ENCODE measurements at regions of chr9 and their contacts with region 1.

Region 1: DNA sequence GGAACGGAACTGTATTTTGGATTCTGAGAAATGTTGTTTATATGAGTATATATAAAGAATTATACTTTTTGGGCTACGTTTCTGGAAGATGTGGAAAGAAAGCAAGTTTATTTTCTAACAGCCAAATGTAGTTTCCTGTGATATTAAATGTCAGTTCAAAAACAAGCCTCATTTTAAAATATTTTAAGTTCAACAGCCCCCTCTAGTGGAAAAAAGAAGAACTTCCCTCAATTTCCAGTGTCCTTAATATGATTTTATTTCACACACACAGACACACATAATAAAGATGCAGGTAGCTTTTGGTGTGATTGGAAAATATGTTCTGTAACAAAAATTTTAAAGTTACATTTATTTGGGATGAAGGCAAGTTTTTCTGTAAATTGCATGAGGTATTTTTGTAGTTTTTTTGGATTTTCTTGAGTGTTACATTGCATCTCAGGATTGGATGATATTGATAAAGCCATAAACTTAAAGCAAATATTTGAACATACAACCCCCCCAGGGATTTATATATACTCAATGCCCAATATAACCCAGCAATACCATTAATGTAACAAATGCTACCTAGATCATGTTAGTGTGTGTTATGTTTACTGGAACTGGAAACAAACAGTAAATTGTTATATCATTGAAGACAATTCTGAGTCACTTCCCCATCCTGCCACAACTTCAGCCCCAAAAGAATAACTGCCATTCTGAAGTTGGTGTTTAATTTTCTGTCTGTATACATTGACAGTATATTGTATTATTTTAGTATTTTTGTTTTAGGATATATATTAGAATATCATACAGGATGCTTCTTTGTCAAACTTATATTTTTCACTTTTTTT is 54.0 kb downstream of the CCDC171 start:
- DNase-seq: no peak
- H3K4me3 ChIP-seq: no peak overlapping the region
- H3K27ac ChIP-seq: no peak overlapping the region
- H3K4me1 ChIP-seq: no peaks in the 10 kb centered on the region
- H3K27me3 ChIP-seq: no peaks in the 10 kb centered on the region
- CTCF ChIP-seq: peak; percentile 68 to 72

Region 2: DNA sequence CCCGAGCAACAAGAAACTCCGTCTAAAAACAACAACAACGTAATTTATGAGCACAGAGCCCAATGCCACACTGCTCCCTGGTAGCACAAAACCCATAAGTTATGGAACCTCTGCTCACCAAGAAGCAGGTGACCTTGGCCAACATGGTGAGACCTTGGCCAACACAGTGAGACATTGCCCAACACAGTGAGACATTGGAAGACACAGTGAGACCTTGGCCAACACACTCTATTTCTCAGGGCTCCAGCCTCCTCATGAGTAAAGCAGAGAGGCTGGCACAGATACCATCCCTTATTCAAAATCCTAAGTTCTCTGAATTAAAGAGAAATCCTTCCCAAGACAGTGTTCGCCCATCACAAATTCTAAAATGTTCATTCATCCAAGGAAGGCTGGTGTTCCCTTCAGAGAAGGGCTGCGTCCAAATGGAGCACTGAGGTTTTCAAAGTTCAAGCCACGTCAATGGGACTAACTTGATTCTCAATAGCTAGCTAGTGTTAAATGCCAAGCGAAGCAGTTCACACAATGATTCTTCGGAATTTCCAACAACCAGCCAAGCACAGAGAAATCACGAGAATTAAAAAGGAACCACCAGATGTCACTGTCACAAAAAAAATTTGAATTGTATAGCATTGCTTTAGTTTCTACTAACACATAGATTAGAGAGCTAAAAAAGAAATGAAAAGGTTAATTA is 329.3 kb before region 1 on chr9:
- intact Hi-C with region 1: loop called (anchors 10 kb)
- DNase-seq: no peak
- H3K4me3 ChIP-seq: no peak overlapping the region
- H3K27ac ChIP-seq: peak overlapping the region in 1 of 2 donors; percentile 39
- H3K4me1 ChIP-seq: peaks cover 0 to 30% (median 4%) of the 10 kb centered on the region in 4 donors
- H3K27me3 ChIP-seq: no peaks in the 10 kb centered on the region
- CTCF ChIP-seq: peak; percentile 31 to 35

Region 3: GRCh38 chr9:15572200-15572770 is 34.6 kb before region 1 on chr9:
- intact Hi-C with region 1: loop called (anchors 5 kb)
- DNase-seq: no peak
- H3K4me3 ChIP-seq: no peak overlapping the region
- H3K27ac ChIP-seq: no peak overlapping the region
- H3K4me1 ChIP-seq: no peaks in the 10 kb centered on the region
- H3K27me3 ChIP-seq: no peaks in the 10 kb centered on the region
- CTCF ChIP-seq: no peak

Region 4: GRCh38 chr9:15882328-15882727 is 275.5 kb after region 1 on chr9:
- intact Hi-C with region 1: no loop called
- DNase-seq: no peak
- H3K4me3 ChIP-seq: no peak overlapping the region
- H3K27ac ChIP-seq: no peak overlapping the region
- H3K4me1 ChIP-seq: no peaks in the 10 kb centered on the region
- H3K27me3 ChIP-seq: no peaks in the 10 kb centered on the region
- CTCF ChIP-seq: no peak